ENCODE measurements at regions of chr17 and their contacts with region 1.

Region 1: GRCh38 chr17:29533976-29534375 is 32.9 kb downstream of the ABHD15 start:
- DNase-seq: no peak
- ATAC-seq: no peak
- H3K4me3 ChIP-seq: no peak overlapping the region
- H3K4me3 Mint-ChIP-seq: no peak overlapping the region
- H3K27ac ChIP-seq: no peak overlapping the region
- H3K27ac Mint-ChIP-seq: peak overlapping the region in 1 of 2 donors; percentile 18
- H3K4me1 ChIP-seq: no peaks in the 10 kb centered on the region
- H3K4me1 Mint-ChIP-seq: no peaks in the 10 kb centered on the region
- H3K27me3 ChIP-seq: no peaks in the 10 kb centered on the region
- H3K27me3 Mint-ChIP-seq: no peaks in the 10 kb centered on the region
- CTCF ChIP-seq: no peak

Region 2: DNA sequence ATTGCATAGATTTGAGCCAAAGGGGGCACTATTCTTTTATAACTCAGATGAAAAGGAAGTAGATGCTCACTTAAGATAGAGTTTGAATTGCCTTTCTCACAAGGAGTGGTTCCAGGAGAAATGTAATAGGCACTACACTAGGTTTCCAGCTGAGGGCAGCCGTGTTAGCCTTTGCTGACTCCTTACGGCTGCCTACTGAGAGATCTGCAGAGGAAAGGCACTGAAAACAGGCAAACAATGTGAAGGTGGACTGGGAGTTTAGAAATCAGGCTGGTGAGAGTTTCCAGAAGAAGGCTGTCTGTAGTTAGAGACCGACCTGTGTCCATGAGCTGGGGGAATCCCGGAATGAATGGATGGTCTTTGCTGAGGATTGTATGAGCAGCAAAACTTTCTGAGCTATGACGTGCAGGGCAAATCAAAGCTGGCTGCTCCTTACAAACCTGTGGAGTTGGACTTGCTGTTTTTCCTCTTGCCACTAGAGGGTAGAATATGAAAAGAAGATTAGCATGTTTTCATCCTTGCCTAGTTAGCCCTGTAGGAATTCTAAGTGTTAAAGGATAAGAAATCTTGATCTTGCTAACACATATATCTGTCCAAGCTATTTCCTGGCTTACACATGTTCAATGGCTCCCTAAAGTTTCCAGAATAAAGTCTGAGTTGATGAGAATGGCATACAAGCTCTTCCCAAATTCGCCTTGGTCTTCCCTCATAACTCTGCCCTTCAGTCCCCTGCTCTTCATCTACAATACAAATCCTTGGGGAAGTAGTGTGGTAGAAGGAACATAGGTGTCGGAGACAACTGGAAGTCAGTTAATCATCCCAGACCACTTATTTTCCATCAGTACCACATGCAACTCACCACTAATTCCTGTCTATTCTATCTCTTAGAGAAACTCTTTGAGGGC is 163.9 kb before region 1 on chr17:
- intact Hi-C with region 1: loop called (anchors 1 kb)
- DNase-seq: peak; percentile 17 to 79
- ATAC-seq: peak; percentile 85 to 93 (median 91)
- H3K4me3 ChIP-seq: no peak overlapping the region
- H3K4me3 Mint-ChIP-seq: no peak overlapping the region
- H3K27ac ChIP-seq: peak overlapping the region; percentile 16
- H3K27ac Mint-ChIP-seq: no peak overlapping the region
- H3K4me1 ChIP-seq: peaks cover 4% of the 10 kb centered on the region
- H3K4me1 Mint-ChIP-seq: no peaks in the 10 kb centered on the region
- H3K27me3 ChIP-seq: no peaks in the 10 kb centered on the region
- H3K27me3 Mint-ChIP-seq: peaks cover 0 to 1% of the 10 kb centered on the region in 2 donors
- CTCF ChIP-seq: peak; percentile 81